Right ventricle myocardium inferior (tissue), 1 donor: ENCODE measurements at regions of chr6 and their contacts with region 1.

Region 1: GRCh38 chr6:37257634-37258404 is at the starts of genes TBC1D22B and TMEM217:
- DNase-seq: peak; percentile 96
- ATAC-seq: peak; percentile 100
- total RNA-seq, gene TBC1D22B: 6.3 TPM
- total RNA-seq, gene TMEM217: 0.30 TPM

Region 2: DNA sequence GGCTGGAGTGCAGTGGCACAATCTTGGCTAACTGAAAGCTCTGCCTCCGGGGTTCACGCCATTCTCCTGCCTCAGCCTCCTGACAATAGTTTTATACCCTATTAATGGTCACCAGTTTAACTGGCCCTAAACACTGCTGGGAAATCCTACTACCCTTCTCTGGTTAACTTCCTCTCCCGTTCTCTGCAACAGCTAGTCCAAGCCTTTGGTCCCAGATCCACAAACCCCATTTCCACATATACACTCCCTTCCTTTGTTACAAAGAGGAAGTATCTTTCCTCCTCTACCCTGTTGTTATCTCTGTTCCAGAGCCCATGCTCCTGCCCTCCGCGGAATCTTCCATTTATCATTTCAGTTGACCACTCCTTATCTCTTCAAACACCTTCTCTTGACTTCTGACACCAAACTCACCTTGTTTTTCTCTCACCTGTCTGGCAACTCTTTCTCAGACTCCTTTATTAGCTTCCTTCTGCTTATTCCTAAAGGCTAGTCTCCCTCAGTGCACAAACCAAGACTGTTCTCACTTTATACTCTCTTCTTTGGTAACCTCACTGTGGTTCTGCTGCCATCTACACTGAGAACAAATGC is 25.3 kb before region 1 on chr6:
- intact Hi-C with region 1: no loop called
- DNase-seq: no peak
- ATAC-seq: no peak

Region 3: GRCh38 chr6:37283671-37284151 is 25.9 kb after region 1 on chr6:
- intact Hi-C with region 1: loop called (anchors 2 kb)
- DNase-seq: peak; percentile 72
- ATAC-seq: peak; percentile 97

Region 4: DNA sequence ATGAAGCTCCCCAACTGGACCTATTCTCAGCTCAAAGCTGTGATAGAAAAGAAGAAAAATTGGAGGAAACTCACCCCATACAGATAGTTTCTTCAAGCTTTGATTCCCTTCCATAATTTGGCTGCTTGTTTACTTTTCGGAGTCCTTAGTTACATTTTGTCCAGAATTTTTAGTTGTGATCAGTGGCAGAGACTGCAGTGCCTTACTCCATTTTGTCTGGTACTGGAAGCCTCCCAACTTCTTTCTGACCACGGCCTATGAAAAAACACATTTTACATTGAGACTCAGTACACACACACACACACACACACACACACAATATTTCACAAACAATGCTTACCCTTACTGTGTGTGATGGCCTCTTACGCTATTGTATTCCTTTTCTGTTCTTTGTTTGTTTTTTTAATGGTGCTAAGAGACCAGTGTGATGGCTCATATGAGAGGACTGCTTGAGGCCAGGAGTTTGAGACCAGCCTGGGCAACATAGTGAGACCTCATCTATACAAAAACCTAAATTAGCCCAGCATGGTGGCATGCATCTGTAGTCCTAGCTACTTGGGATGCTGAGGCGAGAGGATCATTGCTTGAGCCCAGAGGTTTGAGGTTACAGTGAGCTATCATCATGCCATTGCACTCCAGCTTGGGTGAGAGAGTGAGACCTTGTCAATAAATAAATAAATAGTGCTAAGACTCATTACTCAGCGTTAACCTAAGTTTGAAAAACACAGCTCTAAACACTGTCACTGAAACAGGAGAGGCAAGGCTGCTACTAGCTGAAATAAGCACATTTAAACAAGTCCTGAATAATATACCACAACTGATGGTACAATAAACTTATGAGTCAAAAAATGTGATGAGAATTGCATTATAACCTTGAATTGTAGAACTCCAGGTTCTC is 82.2 kb after region 1 on chr6:
- intact Hi-C with region 1: no loop called
- DNase-seq: no peak
- ATAC-seq: no peak

Region 5: GRCh38 chr6:38088829-38089228 is 831.0 kb after region 1 on chr6:
- intact Hi-C with region 1: no loop called
- DNase-seq: no peak
- ATAC-seq: no peak